Activated T-helper 1 cell treated with anti-CD3 and anti-CD28 coated beads, Interleukin-12 subunit alpha, Interleukin-12 subunit beta, Interleukin-2, Interleukin-4 antibody, amounts not matched to agents 30 ng/mL and 10 ng/mL and 1 ng/mL, durations not matched to agents 14 hours and 24 hours and 36 hours (primary cell): ENCODE measurements at regions of chr15 and their contacts with region 1.

Region 1: DNA sequence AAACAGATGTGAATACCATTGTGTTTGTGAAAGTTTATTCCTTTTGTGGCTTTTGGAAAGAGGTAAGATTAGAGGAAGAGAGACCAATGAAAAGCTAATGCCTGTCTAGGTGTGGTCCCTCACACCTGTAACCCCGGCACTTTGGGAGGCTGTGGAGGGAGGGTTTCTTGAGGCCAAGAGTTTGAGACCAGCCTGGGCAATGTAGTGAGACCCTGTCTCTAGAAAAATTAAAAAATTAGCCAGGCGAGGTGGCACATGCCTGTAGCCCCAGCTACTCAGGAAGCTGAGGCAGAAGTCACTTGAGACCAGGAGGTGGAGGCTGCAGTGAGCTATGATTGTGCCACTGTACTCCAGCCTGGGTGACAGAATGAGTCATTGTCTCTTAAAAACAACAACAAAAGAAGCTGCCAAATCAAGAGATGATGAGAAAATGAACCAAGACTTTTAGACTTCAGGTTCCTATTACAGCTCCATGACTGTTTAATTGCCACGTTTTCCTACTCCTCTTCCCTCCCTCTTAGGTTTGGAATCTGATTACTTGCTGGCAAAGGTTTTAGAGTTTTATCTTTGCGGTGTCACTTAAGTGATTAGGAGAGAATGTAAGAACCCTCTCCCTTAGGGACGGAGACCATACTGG is 68.7 kb downstream of the CGNL1 start:
- DNase-seq: no peak
- H3K4me3 Mint-ChIP-seq: no peak overlapping the region
- H3K27ac Mint-ChIP-seq: no peak overlapping the region
- H3K4me1 Mint-ChIP-seq: no peaks in the 10 kb centered on the region
- H3K27me3 Mint-ChIP-seq: peaks cover 6% of the 10 kb centered on the region

Region 2: GRCh38 chr15:57205996-57206395 is 239.0 kb before region 1 on chr15:
- intact Hi-C with region 1: no loop called
- DNase-seq: no peak
- H3K4me3 Mint-ChIP-seq: no peak overlapping the region
- H3K27ac Mint-ChIP-seq: no peak overlapping the region
- H3K4me1 Mint-ChIP-seq: peaks cover 10% of the 10 kb centered on the region
- H3K27me3 Mint-ChIP-seq: no peaks in the 10 kb centered on the region

Region 3: GRCh38 chr15:57909388-57909787 is 464.4 kb after region 1 on chr15:
- intact Hi-C with region 1: loop called (anchors 5 kb)
- DNase-seq: no peak
- H3K4me3 Mint-ChIP-seq: no peak overlapping the region
- H3K27ac Mint-ChIP-seq: no peak overlapping the region
- H3K4me1 Mint-ChIP-seq: no peaks in the 10 kb centered on the region
- H3K27me3 Mint-ChIP-seq: peaks cover 23% of the 10 kb centered on the region